Activated T-helper 2 cell treated with anti-CD3 and anti-CD28 coated beads, Interferon-gamma antibody, Interleukin-2, Interleukin-4, amounts not matched to agents 10 μg/mL and 5 μg/mL and 100 μg/mL, durations not matched to agents 14 hours and 24 hours and 36 hours (primary cell): ENCODE measurements at regions of chr4 and their contacts with region 1.

Region 1: DNA sequence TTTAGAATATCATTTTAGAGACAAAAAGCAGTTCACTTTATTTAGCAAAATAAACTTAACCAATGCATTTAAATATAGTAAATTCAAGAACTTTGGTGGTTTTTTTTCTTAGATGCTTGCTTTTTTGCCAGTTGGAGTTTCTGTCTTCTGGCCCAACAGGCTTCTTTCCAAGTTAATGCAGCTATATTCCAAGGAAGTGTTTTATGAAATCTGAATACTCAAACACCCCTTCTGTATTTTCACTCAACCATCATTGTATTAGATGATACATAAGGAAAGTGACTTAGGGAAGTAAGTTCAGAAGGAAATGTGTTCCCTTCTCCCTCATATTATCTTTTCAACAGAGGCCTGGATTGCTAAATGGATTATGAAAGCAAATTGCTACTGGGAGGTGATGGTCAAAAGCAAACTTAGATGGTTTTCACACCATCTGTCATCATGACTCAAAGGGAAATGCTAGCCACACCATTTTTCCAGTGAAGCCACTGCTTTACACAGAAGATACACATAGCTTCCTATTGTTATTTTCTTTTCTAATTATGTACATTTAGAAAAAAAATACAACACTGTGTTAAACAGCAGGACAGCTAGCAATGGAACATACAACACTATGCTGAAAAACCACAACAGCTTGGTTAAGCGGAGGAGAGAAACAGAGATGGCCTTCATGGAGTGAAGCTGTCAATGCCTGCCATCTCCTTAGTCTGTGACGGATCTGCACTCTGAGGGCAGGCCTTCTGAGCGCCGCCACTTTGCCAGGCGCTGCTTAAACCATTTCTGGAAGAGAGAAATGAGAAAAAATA is 32.9 kb downstream of the HOPX start:
- DNase-seq: no peak
- H3K4me3 Mint-ChIP-seq: no peak overlapping the region
- H3K27ac Mint-ChIP-seq: peak overlapping the region; percentile 72
- H3K4me1 Mint-ChIP-seq: peaks cover 46% of the 10 kb centered on the region
- H3K27me3 Mint-ChIP-seq: no peaks in the 10 kb centered on the region

Region 2: GRCh38 chr4:56552273-56552672 is 95.9 kb before region 1 on chr4:
- intact Hi-C with region 1: loop called (anchors 5 kb)
- DNase-seq: no peak
- H3K4me3 Mint-ChIP-seq: no peak overlapping the region
- H3K27ac Mint-ChIP-seq: no peak overlapping the region
- H3K4me1 Mint-ChIP-seq: peaks cover 5% of the 10 kb centered on the region
- H3K27me3 Mint-ChIP-seq: peaks cover 19% of the 10 kb centered on the region

Region 3: GRCh38 chr4:56681158-56681852 is 33.1 kb after region 1 on chr4 and contains the start of gene HOPX:
- intact Hi-C with region 1: loop called (anchors 2 kb)
- DNase-seq: peak; percentile 17
- H3K4me3 Mint-ChIP-seq: peak within 1 kb of the TSS; percentile 28
- H3K27ac Mint-ChIP-seq: peak within 1 kb of the TSS; percentile 36
- H3K4me1 Mint-ChIP-seq: peaks cover 25% of the 10 kb centered on the region
- H3K27me3 Mint-ChIP-seq: peaks cover 59% of the 10 kb centered on the region
- total RNA-seq, gene HOPX: 58.8 and 60.2 TPM in 2 replicates